HEK293 (cell line): ENCODE measurements at regions of chr17 and their contacts with region 1.

Region 1: GRCh38 chr17:38454516-38454915 is 26.3 kb downstream of the ARHGAP23 start:
- H3K4me3 ChIP-seq: no peak overlapping the region
- H3K27ac ChIP-seq: no peak overlapping the region
- H3K4me1 ChIP-seq: peaks cover 9% of the 10 kb centered on the region
- CTCF ChIP-seq: no peak

Region 2: DNA sequence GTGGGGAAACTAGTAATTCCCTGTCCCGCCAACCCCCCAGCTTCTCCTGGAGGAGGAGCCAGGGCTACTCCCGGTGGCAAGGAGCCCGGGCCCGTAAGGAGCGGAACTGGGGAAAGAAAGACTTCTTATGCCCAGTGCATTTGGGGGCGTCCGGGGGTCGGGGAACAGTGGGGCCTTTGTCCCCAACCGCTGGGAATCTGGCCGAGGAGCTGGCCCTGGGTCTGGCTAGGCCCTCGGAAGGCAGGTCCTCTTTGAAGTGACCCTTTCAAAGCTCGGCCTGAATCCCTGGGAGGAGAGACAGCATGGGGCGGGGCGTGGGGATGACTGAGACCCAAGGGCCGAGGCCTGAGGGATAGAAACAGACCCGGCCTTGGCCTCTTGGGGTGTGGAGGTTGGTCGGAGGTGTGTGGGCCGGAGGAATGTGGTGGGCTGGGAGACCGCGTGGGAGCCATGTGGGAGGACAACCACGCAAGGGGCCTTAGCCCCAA is 20.3 kb before region 1 on chr17:
- CTCF ChIA-PET with region 1: no interaction called
- POLR2A ChIA-PET with region 1: no interaction called
- H3K4me3 ChIP-seq: no peak overlapping the region
- H3K27ac ChIP-seq: no peak overlapping the region
- H3K4me1 ChIP-seq: no peaks in the 10 kb centered on the region
- CTCF ChIP-seq: no peak

Region 3: DNA sequence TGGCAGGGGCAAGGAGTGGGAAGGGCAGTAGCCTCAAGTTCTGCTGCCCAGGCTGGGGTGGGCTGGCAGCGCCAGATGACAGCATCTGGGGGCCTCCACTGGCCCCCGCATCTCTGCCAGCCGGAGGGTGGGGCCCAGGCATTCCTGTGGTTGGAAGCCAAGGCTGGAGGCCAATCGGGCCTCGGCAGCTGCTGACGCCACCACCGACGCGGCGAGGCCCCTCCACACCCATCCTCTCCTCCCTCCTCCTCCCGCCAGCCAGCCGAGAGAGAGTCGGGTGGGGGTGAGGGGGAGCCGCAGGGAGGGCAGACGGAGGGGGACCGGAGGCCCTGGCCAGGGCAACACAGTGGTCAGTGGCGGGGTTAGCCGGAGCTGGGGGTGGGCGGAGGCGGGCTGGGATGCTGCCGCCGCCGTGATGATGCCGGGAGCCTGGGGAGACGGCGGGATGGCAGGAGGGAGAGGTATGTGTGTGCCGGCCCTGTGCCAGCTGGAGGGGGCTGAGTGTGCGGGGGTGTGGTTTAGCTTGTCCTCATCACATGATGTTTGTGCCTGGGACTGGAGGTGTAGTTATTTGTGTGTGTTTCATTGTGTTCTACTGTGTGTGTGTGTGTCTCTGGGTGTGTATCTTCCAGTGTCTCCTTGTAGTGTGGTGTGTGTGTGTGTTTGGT is 10.3 kb after region 1 on chr17:
- CTCF ChIA-PET with region 1: interaction called, 5 read pairs
- POLR2A ChIA-PET with region 1: interaction called, 14 read pairs
- H3K4me3 ChIP-seq: peak overlapping the region; percentile 65
- H3K27ac ChIP-seq: peak overlapping the region; percentile 37; the same call in 1 of the 2 replicates
- H3K4me1 ChIP-seq: peaks cover 11% of the 10 kb centered on the region
- CTCF ChIP-seq: no peak

Region 4: DNA sequence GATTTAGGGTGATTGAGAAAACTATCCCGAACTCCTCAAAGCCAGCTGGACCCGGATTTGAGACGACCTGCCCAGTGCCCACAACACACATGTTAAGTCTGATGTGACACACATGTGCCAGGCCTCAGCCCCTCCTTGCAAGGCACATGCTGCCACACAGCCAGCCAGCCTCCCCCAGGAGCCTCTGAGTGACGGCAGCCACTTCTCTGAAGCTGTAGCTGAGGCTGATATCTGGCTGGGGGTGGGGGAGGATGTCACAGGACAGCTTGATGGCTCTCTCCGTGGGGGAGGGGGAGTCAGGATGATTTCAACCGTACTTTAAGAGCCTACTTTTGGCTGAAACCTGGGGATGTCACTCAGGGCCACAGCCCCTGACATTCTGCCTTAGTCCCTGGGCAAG is 110.4 kb after region 1 on chr17:
- CTCF ChIA-PET with region 1: no interaction called
- POLR2A ChIA-PET with region 1: no interaction called
- H3K4me3 ChIP-seq: no peak overlapping the region
- H3K27ac ChIP-seq: no peak overlapping the region
- H3K4me1 ChIP-seq: peaks cover 3% of the 10 kb centered on the region
- CTCF ChIP-seq: no peak